A549 (cell line): ENCODE measurements at regions of chr16 and their contacts with region 1.

Region 1: GRCh38 chr16:70770626-70771552 is 30.1 kb downstream of the VAC14 start:
- DNase-seq: peak; percentile 64 to 70
- ATAC-seq: peak; percentile 79 to 93
- H3K4me3 ChIP-seq: no peak overlapping the region
- H3K27ac ChIP-seq: peak overlapping the region; percentile 47 to 68
- H3K4me1 ChIP-seq: peaks cover 27% of the 10 kb centered on the region
- CTCF ChIP-seq: peak; percentile 95
- EP300 ChIP-seq: no peak
- POLR2A ChIP-seq: no peak
- RAD21 ChIP-seq: peak; percentile 96 to 98

Region 2: DNA sequence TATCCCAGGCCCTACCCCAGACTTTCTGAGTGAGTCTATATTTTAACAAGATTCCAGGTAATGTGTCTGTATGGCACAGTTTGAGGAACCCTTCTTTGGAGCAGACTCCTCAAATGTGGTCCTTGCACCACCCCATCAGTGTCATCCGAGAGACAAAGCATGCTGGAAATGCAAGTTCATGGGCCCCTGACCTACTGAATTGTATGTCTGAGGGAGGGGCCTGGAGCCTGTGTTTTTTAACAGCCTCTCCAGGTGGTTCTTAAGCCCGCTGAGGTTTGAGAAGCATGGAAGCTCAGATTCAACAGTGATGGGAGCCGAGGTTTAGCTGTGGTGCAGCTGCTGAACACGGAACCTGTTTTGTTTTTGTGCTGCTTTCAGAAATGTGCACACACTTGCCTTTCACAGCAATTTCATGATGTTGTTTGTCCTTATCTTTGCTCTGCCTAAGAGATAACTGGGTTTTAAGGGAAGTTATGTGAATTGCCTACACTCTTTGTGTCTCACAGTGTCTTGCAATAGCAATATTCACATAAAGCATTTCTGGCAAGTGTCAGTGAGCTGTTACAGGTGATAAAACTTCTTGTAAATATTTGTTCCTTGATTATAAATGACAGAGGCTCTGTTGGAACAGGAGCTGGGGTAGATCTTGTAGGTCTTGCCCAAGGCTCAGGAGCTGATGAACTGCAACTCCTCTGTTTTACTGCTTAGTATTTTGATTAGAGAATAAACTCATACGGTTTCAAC is 156.5 kb before region 1 on chr16:
- CTCF ChIA-PET with region 1: no interaction called
- POLR2A ChIA-PET with region 1: no interaction called
- DNase-seq: no peak
- ATAC-seq: no peak
- H3K4me3 ChIP-seq: no peak overlapping the region
- H3K27ac ChIP-seq: no peak overlapping the region
- H3K4me1 ChIP-seq: no peaks in the 10 kb centered on the region
- CTCF ChIP-seq: no peak
- EP300 ChIP-seq: no peak
- POLR2A ChIP-seq: no peak
- RAD21 ChIP-seq: no peak

Region 3: GRCh38 chr16:70653809-70654771 is 116.8 kb before region 1 on chr16:
- CTCF ChIA-PET with region 1: interaction called, 52 read pairs
- POLR2A ChIA-PET with region 1: no interaction called
- DNase-seq: peak; percentile 41 to 78
- ATAC-seq: peak; percentile 80 to 85
- H3K4me3 ChIP-seq: peak overlapping the region; percentile 29; the same call in 2 of the 3 replicates
- H3K27ac ChIP-seq: peak overlapping the region; percentile 57 to 73; a peak in 5 of 6 replicates
- H3K4me1 ChIP-seq: no peaks in the 10 kb centered on the region; the same call in 2 of the 3 replicates
- CTCF ChIP-seq: peak; percentile 94
- EP300 ChIP-seq: no peak
- POLR2A ChIP-seq: no peak
- RAD21 ChIP-seq: peak; percentile 92 to 97

Region 4: GRCh38 chr16:70685938-70686375 is 84.9 kb before region 1 on chr16 and contains the start of gene MTSS2:
- CTCF ChIA-PET with region 1: interaction called, 463 read pairs
- POLR2A ChIA-PET with region 1: interaction called, 4 read pairs
- DNase-seq: peak; percentile 71 to 72
- ATAC-seq: peak; percentile 41 to 51
- H3K4me3 ChIP-seq: peak within 1 kb of the TSS; percentile 84
- H3K27ac ChIP-seq: peak within 1 kb of the TSS; percentile 92 to 97
- H3K4me1 ChIP-seq: peaks cover 84% of the 10 kb centered on the region
- CTCF ChIP-seq: no peak
- EP300 ChIP-seq: no peak
- POLR2A ChIP-seq: peak; percentile 25
- RAD21 ChIP-seq: 0 out of 5 replicates have a peak, but pooled peaks of 1 of the 2 experiments have one; percentile 21
- polyA plus RNA-seq, gene MTSS2: 10.8 and 13.1 TPM in 2 replicates

Region 5: DNA sequence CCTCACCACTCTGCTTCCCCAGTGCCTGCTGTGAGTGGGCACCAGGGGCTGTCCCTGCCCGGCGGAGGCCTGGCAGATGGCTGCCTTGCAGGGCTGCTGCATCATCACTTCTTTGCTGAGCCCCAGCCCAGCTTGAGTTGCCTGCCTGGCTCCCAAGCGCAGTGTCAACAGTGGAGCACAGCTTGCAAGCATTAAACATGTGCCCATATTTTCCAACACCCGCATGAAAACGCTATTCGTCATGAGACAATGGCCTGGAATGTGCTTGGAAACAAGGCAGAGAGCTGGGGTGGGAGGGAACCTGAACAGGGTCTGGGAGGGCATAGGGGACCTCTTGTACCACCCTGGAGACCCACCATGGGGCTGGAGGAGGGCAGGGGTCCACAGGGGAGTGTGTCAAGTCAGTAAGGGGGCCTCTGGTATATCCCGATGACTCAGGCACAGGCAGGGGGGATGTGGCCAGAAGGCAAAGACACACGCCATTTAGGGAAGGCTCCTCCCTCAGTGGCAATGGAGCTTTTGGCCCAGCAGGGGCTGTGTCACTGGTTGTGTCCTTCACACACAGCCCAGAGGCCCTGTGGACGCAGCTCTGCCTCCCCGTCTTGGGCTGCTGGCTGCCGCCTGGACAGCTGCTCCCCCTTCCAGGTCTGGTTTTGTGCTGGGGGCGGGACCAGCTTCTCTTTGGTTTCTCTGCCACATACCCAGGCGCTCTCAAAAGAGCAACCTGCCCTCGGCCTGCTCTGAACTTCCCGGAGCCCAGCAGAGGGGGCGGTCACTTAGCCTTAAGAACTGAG is 67.7 kb before region 1 on chr16:
- CTCF ChIA-PET with region 1: interaction called, 38 read pairs
- POLR2A ChIA-PET with region 1: interaction called, 5 read pairs
- DNase-seq: peak in 1 of 2 experiments; percentile 40
- ATAC-seq: peak; percentile 35 to 60; a peak in 4 of 6 replicates
- H3K4me3 ChIP-seq: no peak overlapping the region
- H3K27ac ChIP-seq: peak overlapping the region; percentile 51 to 92; a peak in 4 of 6 replicates
- H3K4me1 ChIP-seq: peaks cover 71% of the 10 kb centered on the region
- CTCF ChIP-seq: no peak
- EP300 ChIP-seq: no peak
- POLR2A ChIP-seq: no peak
- RAD21 ChIP-seq: no peak

Region 6: GRCh38 chr16:70720430-70721201 is 50.3 kb before region 1 on chr16:
- CTCF ChIA-PET with region 1: interaction called, 34 read pairs
- POLR2A ChIA-PET with region 1: interaction called, 3 read pairs
- DNase-seq: no peak
- ATAC-seq: no peak
- H3K4me3 ChIP-seq: no peak overlapping the region
- H3K27ac ChIP-seq: no peak overlapping the region
- H3K4me1 ChIP-seq: peaks cover 9% of the 10 kb centered on the region
- CTCF ChIP-seq: no peak
- EP300 ChIP-seq: no peak
- POLR2A ChIP-seq: no peak
- RAD21 ChIP-seq: no peak

Region 7: GRCh38 chr16:70737377-70738082 is 33.4 kb before region 1 on chr16:
- CTCF ChIA-PET with region 1: interaction called, 40 read pairs
- POLR2A ChIA-PET with region 1: no interaction called
- DNase-seq: no peak
- ATAC-seq: no peak
- H3K4me3 ChIP-seq: no peak overlapping the region
- H3K27ac ChIP-seq: peak overlapping the region in 1 of 2 experiments; percentile 63; a peak in 3 of 6 replicates
- H3K4me1 ChIP-seq: peaks cover 17% of the 10 kb centered on the region
- CTCF ChIP-seq: no peak
- EP300 ChIP-seq: no peak
- POLR2A ChIP-seq: no peak
- RAD21 ChIP-seq: no peak

Region 8: DNA sequence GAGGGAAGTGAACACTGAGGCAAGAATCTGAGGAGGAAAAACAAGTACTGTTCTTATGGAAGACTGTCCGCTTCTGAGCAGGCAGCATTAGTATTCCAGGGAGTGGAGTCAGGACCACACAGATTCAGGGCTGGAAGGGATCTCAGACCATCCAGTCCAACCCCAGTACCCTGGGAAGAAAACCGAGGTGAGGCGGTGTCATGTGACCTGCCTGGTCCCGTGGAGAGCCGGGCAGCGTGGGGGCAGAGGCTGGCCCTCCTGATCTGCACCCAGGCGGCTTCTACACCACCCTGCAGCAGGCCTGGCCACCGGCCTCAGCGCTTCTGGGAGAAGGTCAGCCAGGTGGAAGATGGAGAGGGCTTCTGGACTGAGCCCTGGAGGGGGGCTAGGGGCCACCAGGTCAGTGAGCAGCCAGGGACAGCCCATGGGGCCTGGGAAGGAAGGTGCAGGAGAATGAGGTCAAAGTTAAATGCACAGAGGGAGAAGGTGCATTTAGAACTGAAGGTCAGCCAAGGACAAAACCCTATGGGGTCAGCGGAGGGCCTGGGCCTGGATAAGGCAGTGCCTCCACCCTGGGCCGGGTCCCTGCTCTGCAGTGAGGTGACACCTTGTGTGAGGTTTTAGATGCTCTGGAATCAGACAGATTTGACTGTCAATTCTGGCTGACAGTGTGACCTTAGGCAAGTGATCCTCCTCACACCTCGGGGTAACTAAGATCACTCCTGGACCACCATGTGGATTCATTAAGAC is 15.9 kb before region 1 on chr16:
- CTCF ChIA-PET with region 1: interaction called, 112 read pairs
- POLR2A ChIA-PET with region 1: no interaction called
- DNase-seq: no peak
- ATAC-seq: no peak
- H3K4me3 ChIP-seq: no peak overlapping the region
- H3K27ac ChIP-seq: 0 out of 6 replicates have a peak overlapping the region, but pooled peaks of 1 of the 2 experiments have one; percentile 22
- H3K4me1 ChIP-seq: peaks cover 35% of the 10 kb centered on the region
- CTCF ChIP-seq: no peak
- EP300 ChIP-seq: no peak
- POLR2A ChIP-seq: no peak
- RAD21 ChIP-seq: no peak